Tibial artery (tissue), 4 donors: ENCODE measurements at regions of chr19 and their contacts with region 1.

Region 1: DNA sequence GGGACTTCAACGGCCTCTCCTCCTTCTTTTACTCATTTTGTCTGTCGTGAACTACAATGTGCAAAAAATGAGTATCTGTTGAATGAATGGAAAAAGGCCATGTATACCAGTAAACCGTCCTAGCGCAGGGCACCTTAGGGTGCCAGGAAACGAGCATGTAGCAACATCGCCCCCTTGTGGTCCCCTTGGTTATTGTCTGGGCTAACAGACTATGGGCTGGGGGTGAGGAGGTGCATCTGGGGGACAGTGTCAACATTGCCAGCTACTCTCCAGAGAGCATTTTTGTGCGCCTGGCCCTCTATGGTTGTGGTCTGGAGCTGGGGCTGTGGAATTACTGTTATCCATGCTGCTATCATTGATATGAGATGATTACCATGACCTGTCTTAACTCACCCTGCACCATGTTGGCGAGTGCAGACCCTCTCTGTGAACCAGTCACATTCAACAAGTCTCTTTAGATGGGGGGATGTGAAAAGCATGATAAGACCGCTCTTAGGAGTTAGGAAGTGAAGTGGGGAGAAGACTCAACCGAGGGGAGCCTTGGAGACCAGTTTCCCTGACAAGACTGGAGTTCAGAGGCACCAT is 22.8 kb upstream of the SIGLEC11 start:
- DNase-seq: peak in 1 of 2 donors; percentile 54
- H3K4me3 ChIP-seq: no peak overlapping the region
- H3K27ac ChIP-seq: no peak overlapping the region
- H3K4me1 ChIP-seq: no peaks in the 10 kb centered on the region
- H3K27me3 ChIP-seq: no peaks in the 10 kb centered on the region
- CTCF ChIP-seq: peak; percentile 70 to 71

Region 2: GRCh38 chr19:49937750-49938381 is 45.9 kb before region 1 on chr19:
- intact Hi-C with region 1: loop called (anchors 5 kb)
- DNase-seq: peak; percentile 52 to 84
- H3K4me3 ChIP-seq: no peak overlapping the region
- H3K27ac ChIP-seq: no peak overlapping the region
- H3K4me1 ChIP-seq: peaks cover 0 to 9% (median 4%) of the 10 kb centered on the region in 4 donors
- H3K27me3 ChIP-seq: peaks cover 0 to 14% of the 10 kb centered on the region in 2 donors
- CTCF ChIP-seq: peak; percentile 94 to 96